ENCODE measurements at regions of chr14 and their contacts with region 1.

Region 1: GRCh38 chr14:61585598-61586543 is 109.4 kb upstream of the HIF1A start:
- DNase-seq: peak; percentile 76 to 93
- H3K4me3 ChIP-seq: no peak overlapping the region
- H3K27ac ChIP-seq: peak overlapping the region; percentile 78 to 87
- H3K4me1 ChIP-seq: peaks cover 0 to 52% (median 36%) of the 10 kb centered on the region in 4 donors
- H3K27me3 ChIP-seq: no peaks in the 10 kb centered on the region
- CTCF ChIP-seq: no peak

Region 2: GRCh38 chr14:61475316-61475715 is 110.6 kb before region 1 on chr14:
- intact Hi-C with region 1: loop called (anchors 2 kb)
- DNase-seq: no peak
- H3K4me3 ChIP-seq: no peak overlapping the region
- H3K27ac ChIP-seq: peak overlapping the region; percentile 82 to 86
- H3K4me1 ChIP-seq: peaks cover 0 to 73% (median 56%) of the 10 kb centered on the region in 4 donors
- H3K27me3 ChIP-seq: no peaks in the 10 kb centered on the region
- CTCF ChIP-seq: peak; percentile 62 to 71

Region 3: GRCh38 chr14:61525293-61526011 is 60.4 kb before region 1 on chr14:
- intact Hi-C with region 1: loop called (anchors 5 kb)
- DNase-seq: peak; percentile 86 to 92
- H3K4me3 ChIP-seq: no peak overlapping the region
- H3K27ac ChIP-seq: peak overlapping the region; percentile 80 to 86
- H3K4me1 ChIP-seq: peaks cover 9 to 53% (median 37%) of the 10 kb centered on the region in 4 donors
- H3K27me3 ChIP-seq: no peaks in the 10 kb centered on the region
- CTCF ChIP-seq: no peak

Region 4: GRCh38 chr14:61694830-61695694 is 109.2 kb after region 1 on chr14 and contains the start of gene HIF1A:
- intact Hi-C with region 1: loop called (anchors 10 kb)
- DNase-seq: peak; percentile 97 to 99
- H3K4me3 ChIP-seq: peak within 1 kb of the TSS; percentile 72 to 90
- H3K27ac ChIP-seq: peak within 1 kb of the TSS; percentile 92 to 99
- H3K4me1 ChIP-seq: peaks cover 0 to 46% (median 3%) of the 10 kb centered on the region in 4 donors
- H3K27me3 ChIP-seq: no peaks in the 10 kb centered on the region
- CTCF ChIP-seq: peak in 1 of 2 experiments; percentile 8

Measured in tibial artery (tissue), 4 donors.